CD8-positive, alpha-beta memory T cell (primary cell): ENCODE measurements at regions of chr2 and their contacts with region 1.

Region 1: GRCh38 chr2:219402665-219403515 is 15.2 kb upstream of the DNPEP start:
- DNase-seq: peak; percentile 41 to 65 (median 48)
- H3K4me3 ChIP-seq: no peak overlapping the region
- H3K4me3 Mint-ChIP-seq: no peak overlapping the region
- H3K27ac ChIP-seq: no peak overlapping the region
- H3K27ac Mint-ChIP-seq: peak overlapping the region in 1 of 8 donors; percentile 21
- H3K4me1 ChIP-seq: peaks cover under 1% of the 10 kb centered on the region
- H3K4me1 Mint-ChIP-seq: peaks cover 0 to 5% (median 0%) of the 10 kb centered on the region in 3 donors
- H3K27me3 ChIP-seq: no peaks in the 10 kb centered on the region
- H3K27me3 Mint-ChIP-seq: peaks cover 4 to 24% of the 10 kb centered on the region in 2 donors

Region 2: DNA sequence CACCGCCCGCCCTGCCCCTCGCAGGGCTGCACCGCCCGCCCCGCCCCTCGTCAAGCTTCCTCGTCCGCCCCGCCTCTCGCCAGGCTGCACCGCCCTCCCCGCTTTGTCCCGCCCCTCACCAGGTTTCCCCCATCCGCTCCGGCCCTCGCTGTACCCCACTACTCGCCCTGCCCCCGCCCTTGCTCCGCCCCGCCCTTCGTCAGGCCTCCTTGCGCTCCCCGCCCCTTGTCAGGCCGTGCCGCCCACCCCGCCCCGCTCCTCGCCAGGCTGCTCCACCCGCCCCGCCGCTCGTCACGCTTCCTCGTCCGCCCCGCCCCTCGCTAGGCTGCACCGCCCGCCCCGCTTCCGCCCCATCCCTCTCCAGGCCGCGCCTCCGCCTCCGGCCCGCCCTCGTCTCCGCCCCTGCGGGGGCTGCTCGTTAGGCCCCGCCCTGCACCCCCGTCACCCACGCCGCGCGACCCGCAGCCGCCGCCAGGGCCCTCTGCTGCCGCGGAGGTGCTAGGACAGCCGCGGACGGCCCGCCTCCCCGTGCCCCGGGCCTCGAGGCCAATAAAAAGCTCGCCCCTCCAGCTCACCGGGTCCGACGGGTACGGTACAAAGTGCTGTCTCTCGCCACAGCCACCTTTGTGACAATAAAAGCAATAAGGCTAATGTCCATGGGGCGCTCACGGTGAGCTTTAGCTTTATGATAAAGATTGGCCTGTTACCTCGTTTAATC is 14.6 kb before region 1 on chr2:
- CTCF ChIA-PET with region 1: interaction called, 25 read pairs
- POLR2A ChIA-PET with region 1: no interaction called
- DNase-seq: peak; percentile 99 to 100 (median 99)
- H3K4me3 ChIP-seq: peak overlapping the region; percentile 61
- H3K4me3 Mint-ChIP-seq: peak overlapping the region; percentile 80 to 99 (median 96)
- H3K27ac ChIP-seq: peak overlapping the region; percentile 34
- H3K27ac Mint-ChIP-seq: peak overlapping the region; percentile 82 to 96 (median 92)
- H3K4me1 ChIP-seq: peaks cover 21% of the 10 kb centered on the region
- H3K4me1 Mint-ChIP-seq: peaks cover 20 to 36% (median 23%) of the 10 kb centered on the region in 3 donors
- H3K27me3 ChIP-seq: no peaks in the 10 kb centered on the region
- H3K27me3 Mint-ChIP-seq: no peaks in the 10 kb centered on the region